ENCODE measurements at regions of chr16 and their contacts with region 1.

Region 1: DNA sequence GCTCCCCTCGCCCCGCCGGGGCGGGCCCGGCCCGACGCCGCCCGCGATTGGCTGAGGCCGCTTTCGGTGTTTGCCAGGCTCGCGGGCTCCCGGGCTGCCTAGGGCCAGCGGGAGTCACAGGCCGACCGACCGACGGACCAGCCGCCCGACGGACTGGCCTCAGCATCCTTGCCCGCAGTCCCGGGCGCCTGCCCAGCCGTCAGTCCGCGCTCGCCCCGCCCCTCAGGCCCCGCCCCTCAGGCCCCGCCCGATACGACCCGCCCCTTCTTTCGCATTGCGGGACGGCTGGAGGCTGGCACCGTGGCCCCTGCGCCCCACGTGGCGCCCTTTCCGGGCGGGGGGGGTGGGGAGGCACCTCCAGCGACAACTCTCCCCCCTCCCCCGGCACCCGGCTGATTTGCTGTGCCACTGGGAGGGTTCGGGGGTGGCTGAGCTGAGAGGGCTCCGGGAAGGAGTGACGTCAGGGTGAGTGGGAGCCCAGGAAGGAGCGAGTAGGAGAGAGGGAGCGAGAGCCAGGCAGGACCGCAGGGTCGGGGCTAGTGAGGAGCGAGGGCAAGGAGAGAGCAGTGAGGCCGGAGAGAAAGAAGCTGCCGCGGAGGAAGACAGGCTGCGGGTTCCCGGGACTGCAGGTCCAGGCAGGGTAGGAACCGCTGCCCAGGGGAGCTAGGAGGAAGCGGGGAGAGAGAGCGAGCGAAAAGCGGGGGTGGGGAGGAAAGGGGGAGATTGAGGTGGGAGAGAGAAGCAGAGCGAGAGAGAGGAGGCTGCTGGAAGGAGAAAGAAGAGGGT is at the start of gene ASPHD1:
- DNase-seq: peak in 11 of 14 experiments; percentile 47 to 88 (median 70)
- ATAC-seq: peak; percentile 89
- H3K4me3 ChIP-seq: peak within 1 kb of the TSS; percentile 55
- H3K4me3 Mint-ChIP-seq: peak within 1 kb of the TSS; percentile 74
- H3K27ac ChIP-seq: no peak within 1 kb of the TSS
- H3K27ac Mint-ChIP-seq: no peak within 1 kb of the TSS
- H3K4me1 ChIP-seq: peaks cover 22% of the 10 kb centered on the region
- H3K4me1 Mint-ChIP-seq: peaks cover 4% of the 10 kb centered on the region
- H3K27me3 ChIP-seq: peaks cover 28 to 29% of the 10 kb centered on the region in 2 experiments
- H3K27me3 Mint-ChIP-seq: peaks cover 31% of the 10 kb centered on the region
- CTCF ChIP-seq: no peak
- total RNA-seq, gene ASPHD1: not detected

Region 2: DNA sequence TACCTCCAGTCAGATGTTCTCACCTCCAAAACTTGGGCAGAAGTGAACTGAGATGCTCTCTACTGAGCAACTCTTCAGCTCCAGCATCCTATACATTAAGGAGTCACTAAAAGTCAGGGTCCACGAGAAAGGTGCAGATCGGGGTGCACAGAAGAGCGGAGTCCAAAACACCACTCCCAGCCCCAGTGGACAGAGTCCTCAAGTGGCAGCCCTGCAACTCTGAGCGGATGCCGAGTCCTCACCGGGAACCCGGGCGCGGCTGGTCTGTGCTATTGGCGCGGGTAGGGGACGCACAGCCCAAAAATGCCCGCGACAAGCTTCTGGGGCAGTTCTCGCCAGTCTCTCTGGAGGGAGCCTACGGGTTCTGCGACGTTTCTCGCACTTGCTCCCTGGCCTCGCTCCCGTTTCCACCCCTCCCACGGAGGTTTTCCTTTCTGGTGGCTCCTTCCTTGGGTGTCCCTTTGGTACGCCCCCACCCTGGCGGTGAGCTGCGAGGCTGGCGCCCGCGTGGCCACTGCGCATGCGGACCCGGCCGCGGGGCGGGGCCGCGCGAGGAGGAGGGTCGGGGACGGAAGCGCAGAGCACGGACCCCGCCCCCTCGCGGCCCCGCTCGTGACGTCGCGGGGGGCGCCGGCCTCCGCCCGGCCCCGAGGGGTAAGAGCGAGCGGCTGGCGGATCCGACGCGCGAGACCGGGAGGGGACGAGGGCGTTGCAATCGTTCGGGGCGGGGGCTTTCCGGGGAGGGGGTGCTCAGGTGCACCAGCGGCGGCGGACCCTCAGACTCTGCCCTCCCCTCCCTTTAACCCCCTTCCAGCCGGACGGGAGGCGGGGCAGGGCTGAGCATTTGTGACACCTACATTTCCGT is 61.4 kb after region 1 on chr16 and contains the start of gene TMEM219:
- CTCF ChIA-PET with region 1: interaction called, 5 read pairs
- POLR2A ChIA-PET with region 1: interaction called, 9 read pairs
- intact Hi-C with region 1: loop called in 1 of 2 experiments (anchors 1 kb)
- DNase-seq: peak; percentile 87 to 97 (median 94)
- ATAC-seq: peak; percentile 83
- H3K4me3 ChIP-seq: peak within 1 kb of the TSS; percentile 88
- H3K4me3 Mint-ChIP-seq: peak within 1 kb of the TSS; percentile 93
- H3K27ac ChIP-seq: peak within 1 kb of the TSS; percentile 77 to 92
- H3K27ac Mint-ChIP-seq: peak within 1 kb of the TSS; percentile 91
- H3K4me1 ChIP-seq: peaks cover 23% of the 10 kb centered on the region
- H3K4me1 Mint-ChIP-seq: peaks cover 31% of the 10 kb centered on the region
- H3K27me3 ChIP-seq: no peaks in the 10 kb centered on the region
- H3K27me3 Mint-ChIP-seq: no peaks in the 10 kb centered on the region
- CTCF ChIP-seq: peak; percentile 32
- total RNA-seq, gene TMEM219: 56.9 to 63.3 TPM

Region 3: GRCh38 chr16:29983420-29984136 is 83.3 kb after region 1 on chr16:
- CTCF ChIA-PET with region 1: no interaction called
- POLR2A ChIA-PET with region 1: no interaction called
- intact Hi-C with region 1: no loop called
- DNase-seq: no peak
- ATAC-seq: no peak
- H3K4me3 ChIP-seq: no peak overlapping the region
- H3K4me3 Mint-ChIP-seq: no peak overlapping the region
- H3K27ac ChIP-seq: no peak overlapping the region
- H3K27ac Mint-ChIP-seq: no peak overlapping the region
- H3K4me1 ChIP-seq: no peaks in the 10 kb centered on the region
- H3K4me1 Mint-ChIP-seq: no peaks in the 10 kb centered on the region
- H3K27me3 ChIP-seq: no peaks in the 10 kb centered on the region
- H3K27me3 Mint-ChIP-seq: no peaks in the 10 kb centered on the region
- CTCF ChIP-seq: no peak